ENCODE measurements at regions of chr12 and their contacts with region 1.

Region 1: DNA sequence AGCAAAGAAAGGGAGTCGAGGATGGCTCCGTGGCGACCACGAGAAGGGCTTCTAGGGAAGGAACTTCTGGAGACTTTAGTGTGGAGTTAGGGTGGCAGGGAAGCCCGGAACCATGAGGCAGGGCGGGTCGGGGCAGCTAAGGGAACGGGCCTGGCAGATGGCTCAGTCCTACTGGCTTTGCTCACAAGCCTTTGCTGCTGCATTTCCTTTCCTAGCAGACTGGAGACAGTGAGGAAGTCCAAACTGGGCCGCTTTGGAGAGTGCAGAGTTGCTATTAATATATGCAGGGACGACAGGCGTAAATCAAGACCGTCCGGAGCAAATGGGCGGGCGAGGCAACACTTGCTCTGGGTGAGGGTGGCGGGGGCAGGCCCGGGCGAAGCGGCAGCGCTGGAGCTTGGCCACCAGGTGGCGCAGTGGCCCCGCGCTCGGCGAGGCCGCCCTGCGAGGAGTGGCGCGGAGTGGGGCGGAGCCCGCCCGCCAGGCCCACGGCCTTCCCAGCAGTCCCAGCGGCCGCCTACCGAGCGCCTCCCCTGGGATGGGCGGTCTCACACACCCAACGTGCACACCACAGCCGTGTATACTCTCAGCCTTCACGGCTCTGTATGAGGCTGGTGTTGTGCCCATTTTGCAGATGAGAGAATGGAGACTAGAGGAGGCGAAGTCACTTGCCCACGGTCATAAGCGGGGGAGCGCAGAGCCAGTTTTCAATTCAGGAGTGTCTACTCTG is 24.4 kb upstream of the LRTM2 start:
- DNase-seq: peak; percentile 93 to 95 (median 94)
- H3K4me3 ChIP-seq: peak overlapping the region; percentile 38 to 96
- H3K4me3 Mint-ChIP-seq: peak overlapping the region; percentile 91 to 96 (median 92)
- H3K27ac ChIP-seq: peak overlapping the region; percentile 82
- H3K27ac Mint-ChIP-seq: peak overlapping the region; percentile 89 to 98 (median 92)
- H3K4me1 ChIP-seq: peaks cover 15% of the 10 kb centered on the region
- H3K4me1 Mint-ChIP-seq: peaks cover 15 to 32% (median 22%) of the 10 kb centered on the region in 4 donors
- H3K27me3 ChIP-seq: no peaks in the 10 kb centered on the region
- H3K27me3 Mint-ChIP-seq: no peaks in the 10 kb centered on the region

Region 2: DNA sequence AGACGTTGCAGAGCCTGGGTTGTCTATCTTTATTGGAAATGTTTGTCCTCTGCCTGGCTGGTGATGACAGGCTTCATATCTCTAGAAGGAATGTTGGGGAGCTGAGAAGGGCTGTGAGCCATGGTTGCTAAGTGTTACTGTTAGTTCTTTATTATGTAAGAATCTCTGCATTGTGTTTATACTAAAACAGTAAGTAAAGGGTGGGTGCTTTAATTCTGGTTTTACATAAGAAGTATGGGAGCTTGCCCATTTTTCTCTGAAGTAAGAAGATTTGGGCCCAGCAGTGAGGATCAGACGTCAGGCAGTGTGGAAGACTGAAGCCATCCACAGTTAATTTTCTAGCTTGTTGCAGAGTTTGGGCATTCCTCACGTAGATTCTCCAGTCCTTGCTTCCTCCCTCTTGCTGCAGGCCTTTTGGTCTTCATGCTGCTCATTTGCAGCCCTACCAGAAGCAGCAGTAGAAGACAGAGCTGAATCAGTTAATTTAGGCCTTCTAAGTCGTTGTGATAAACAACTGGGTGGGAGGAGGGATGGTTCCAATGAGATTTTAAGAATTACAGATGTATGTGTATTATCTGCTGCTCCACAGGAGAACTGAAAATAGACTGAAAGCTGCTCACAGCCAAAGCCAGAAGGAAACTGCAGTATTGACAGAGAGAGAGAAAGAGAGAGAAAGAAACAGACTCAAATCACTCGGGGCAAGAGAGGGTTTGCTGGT is 145.5 kb before region 1 on chr12:
- CTCF ChIA-PET with region 1: interaction called, 612 read pairs
- POLR2A ChIA-PET with region 1: interaction called, 57 read pairs
- intact Hi-C with region 1: loop called (anchors 1 kb)
- DNase-seq: no peak
- H3K4me3 ChIP-seq: no peak overlapping the region
- H3K4me3 Mint-ChIP-seq: no peak overlapping the region
- H3K27ac ChIP-seq: no peak overlapping the region
- H3K27ac Mint-ChIP-seq: peak overlapping the region in 1 of 7 donors; percentile 53
- H3K4me1 ChIP-seq: no peaks in the 10 kb centered on the region
- H3K4me1 Mint-ChIP-seq: peaks cover 0 to 4% (median 3%) of the 10 kb centered on the region in 4 donors
- H3K27me3 ChIP-seq: no peaks in the 10 kb centered on the region
- H3K27me3 Mint-ChIP-seq: peaks cover 6 to 15% of the 10 kb centered on the region in 2 donors

Region 3: GRCh38 chr12:1668833-1669543 is 127.0 kb before region 1 on chr12:
- CTCF ChIA-PET with region 1: interaction called, 11 read pairs
- POLR2A ChIA-PET with region 1: interaction called, 4 read pairs
- intact Hi-C with region 1: no loop called
- DNase-seq: no peak
- H3K4me3 ChIP-seq: no peak overlapping the region
- H3K4me3 Mint-ChIP-seq: peak overlapping the region in 7 of 8 donors; percentile 0 to 66 (median 27)
- H3K27ac ChIP-seq: no peak overlapping the region
- H3K27ac Mint-ChIP-seq: peak overlapping the region in 6 of 7 donors; percentile 57 to 88 (median 62)
- H3K4me1 ChIP-seq: peaks cover 35% of the 10 kb centered on the region
- H3K4me1 Mint-ChIP-seq: peaks cover 34 to 48% (median 40%) of the 10 kb centered on the region in 4 donors
- H3K27me3 ChIP-seq: no peaks in the 10 kb centered on the region
- H3K27me3 Mint-ChIP-seq: no peaks in the 10 kb centered on the region

Region 4: GRCh38 chr12:1703771-1704170 is 92.2 kb before region 1 on chr12:
- CTCF ChIA-PET with region 1: no interaction called
- POLR2A ChIA-PET with region 1: no interaction called
- intact Hi-C with region 1: no loop called
- DNase-seq: no peak
- H3K4me3 ChIP-seq: no peak overlapping the region
- H3K4me3 Mint-ChIP-seq: no peak overlapping the region
- H3K27ac ChIP-seq: no peak overlapping the region
- H3K27ac Mint-ChIP-seq: no peak overlapping the region
- H3K4me1 ChIP-seq: peaks cover 46% of the 10 kb centered on the region
- H3K4me1 Mint-ChIP-seq: peaks cover 33 to 58% (median 41%) of the 10 kb centered on the region in 4 donors
- H3K27me3 ChIP-seq: no peaks in the 10 kb centered on the region
- H3K27me3 Mint-ChIP-seq: no peaks in the 10 kb centered on the region

Region 5: DNA sequence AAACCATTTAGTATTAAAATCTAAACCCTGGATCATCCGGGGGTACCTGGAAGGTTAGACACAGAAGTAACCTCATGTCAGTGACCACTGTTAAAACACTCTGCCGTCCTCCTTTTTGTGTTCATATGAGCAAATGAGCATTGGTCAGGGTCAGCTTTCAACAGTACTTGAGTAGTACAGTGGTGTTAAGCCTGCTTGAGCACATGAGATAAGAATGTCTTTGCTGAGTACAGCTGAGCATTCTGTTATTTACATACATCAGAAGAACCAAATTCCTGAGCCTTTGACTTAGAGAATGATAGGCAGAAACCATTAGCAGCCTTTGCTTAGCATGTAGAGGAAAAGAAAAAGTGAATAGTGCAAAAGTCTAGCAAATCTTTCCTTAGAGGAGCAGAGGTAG is 14.2 kb before region 1 on chr12:
- CTCF ChIA-PET with region 1: interaction called, 19 read pairs
- POLR2A ChIA-PET with region 1: no interaction called
- intact Hi-C with region 1: no loop called
- DNase-seq: no peak
- H3K4me3 ChIP-seq: no peak overlapping the region
- H3K4me3 Mint-ChIP-seq: no peak overlapping the region
- H3K27ac ChIP-seq: no peak overlapping the region
- H3K27ac Mint-ChIP-seq: no peak overlapping the region
- H3K4me1 ChIP-seq: no peaks in the 10 kb centered on the region
- H3K4me1 Mint-ChIP-seq: no peaks in the 10 kb centered on the region
- H3K27me3 ChIP-seq: no peaks in the 10 kb centered on the region
- H3K27me3 Mint-ChIP-seq: no peaks in the 10 kb centered on the region

Region 6: GRCh38 chr12:2034633-2035430 is 238.9 kb after region 1 on chr12:
- CTCF ChIA-PET with region 1: interaction called, 7 read pairs
- POLR2A ChIA-PET with region 1: interaction called, 3 read pairs
- intact Hi-C with region 1: loop called (anchors 1 kb)
- DNase-seq: peak; percentile 74 to 84 (median 81)
- H3K4me3 ChIP-seq: peak overlapping the region in 1 of 2 donors; percentile 53
- H3K4me3 Mint-ChIP-seq: peak overlapping the region; percentile 69 to 78 (median 74)
- H3K27ac ChIP-seq: no peak overlapping the region
- H3K27ac Mint-ChIP-seq: peak overlapping the region in 5 of 7 donors; percentile 4 to 80 (median 36)
- H3K4me1 ChIP-seq: peaks cover 11% of the 10 kb centered on the region
- H3K4me1 Mint-ChIP-seq: peaks cover 6 to 11% (median 9%) of the 10 kb centered on the region in 4 donors
- H3K27me3 ChIP-seq: no peaks in the 10 kb centered on the region
- H3K27me3 Mint-ChIP-seq: peaks cover 24 to 27% of the 10 kb centered on the region in 2 donors

Measured in CD4-positive, alpha-beta memory T cell (primary cell).